K562 (cell line): ENCODE measurements at regions of chr3 and their contacts with region 1.

Region 1: GRCh38 chr3:71859123-71859519 is 74.2 kb upstream of the PROK2 start:
- DNase-seq: peak in 2 of 4 experiments; percentile 10 to 26
- ATAC-seq: peak; percentile 63; the same call in 2 of the 3 replicates
- H3K4me3 ChIP-seq: no peak overlapping the region
- H3K27ac ChIP-seq: no peak overlapping the region
- H3K4me1 ChIP-seq: no peaks in the 10 kb centered on the region
- H3K27me3 ChIP-seq: peaks cover 0 to 13% of the 10 kb centered on the region in 2 experiments; a peak in 3 of 5 replicates
- CTCF ChIP-seq: peak; percentile 16 to 69 (median 41); a peak in 4 of 6 replicates
- EP300 ChIP-seq: no peak
- POLR2A ChIP-seq: no peak
- RAD21 ChIP-seq: peak; percentile 77 to 89

Region 2: GRCh38 chr3:71360764-71361163 is 498.4 kb before region 1 on chr3:
- CTCF ChIA-PET with region 1: no interaction called
- POLR2A ChIA-PET with region 1: no interaction called
- in situ Hi-C with region 1: no loop called
- intact Hi-C with region 1: no loop called
- DNase-seq: no peak
- ATAC-seq: no peak
- H3K4me3 ChIP-seq: no peak overlapping the region
- H3K27ac ChIP-seq: no peak overlapping the region
- H3K4me1 ChIP-seq: no peaks in the 10 kb centered on the region
- H3K27me3 ChIP-seq: no peaks in the 10 kb centered on the region
- CTCF ChIP-seq: no peak
- EP300 ChIP-seq: no peak
- POLR2A ChIP-seq: no peak
- RAD21 ChIP-seq: no peak

Region 3: DNA sequence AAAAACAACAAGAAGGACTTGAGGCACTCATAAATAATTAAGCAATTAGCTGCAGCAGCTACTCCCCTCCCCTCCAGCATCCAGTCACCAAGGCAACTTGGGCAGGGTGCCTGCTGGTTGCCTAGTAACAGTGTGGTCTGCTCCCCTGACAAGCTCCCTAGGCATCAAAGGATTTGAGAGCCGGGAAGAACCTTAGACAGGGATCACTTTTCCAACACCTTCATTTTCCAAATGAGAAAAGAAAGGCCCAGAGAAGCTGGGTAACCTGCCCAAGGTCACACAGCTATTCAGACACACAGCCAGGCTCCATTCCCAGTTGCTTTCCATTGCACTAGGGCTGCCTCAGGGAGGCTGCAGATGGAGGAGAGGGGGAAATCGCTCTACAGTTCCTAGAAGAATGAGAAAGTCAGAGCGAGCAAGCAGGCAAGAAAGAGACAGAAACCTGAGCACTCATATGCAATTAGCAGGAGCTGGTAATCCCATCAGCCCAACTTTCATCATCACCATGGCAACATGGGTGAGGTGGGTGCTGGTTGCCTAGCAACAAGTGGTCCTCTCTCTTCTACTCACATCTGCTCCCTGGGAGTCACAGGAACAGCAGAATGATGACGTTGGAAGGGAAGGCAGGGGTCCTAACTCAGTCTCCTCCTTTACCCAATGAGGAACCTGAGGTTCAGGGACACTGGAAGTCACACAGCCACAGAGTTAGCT is 130.3 kb before region 1 on chr3:
- CTCF ChIA-PET with region 1: interaction called, 8 read pairs
- POLR2A ChIA-PET with region 1: no interaction called
- in situ Hi-C with region 1: loop called (anchors 5 kb)
- intact Hi-C with region 1: loop called (anchors 2 kb)
- DNase-seq: peak; percentile 30 to 65 (median 60)
- ATAC-seq: no peak
- H3K4me3 ChIP-seq: no peak overlapping the region
- H3K27ac ChIP-seq: no peak overlapping the region
- H3K4me1 ChIP-seq: peaks cover 0 to 11% of the 10 kb centered on the region in 2 experiments; a peak in 3 of 5 replicates
- H3K27me3 ChIP-seq: peaks cover 3 to 12% of the 10 kb centered on the region in 2 experiments; a peak in 2 of 5 replicates
- CTCF ChIP-seq: no peak
- EP300 ChIP-seq: no peak
- POLR2A ChIP-seq: no peak
- RAD21 ChIP-seq: no peak

Region 4: GRCh38 chr3:71846185-71846584 is 12.9 kb before region 1 on chr3:
- CTCF ChIA-PET with region 1: no interaction called
- POLR2A ChIA-PET with region 1: no interaction called
- in situ Hi-C with region 1: no loop called
- intact Hi-C with region 1: no loop called
- DNase-seq: peak in 1 of 4 experiments; percentile 6
- ATAC-seq: no peak
- H3K4me3 ChIP-seq: no peak overlapping the region
- H3K27ac ChIP-seq: no peak overlapping the region
- H3K4me1 ChIP-seq: no peaks in the 10 kb centered on the region
- H3K27me3 ChIP-seq: no peaks in the 10 kb centered on the region
- CTCF ChIP-seq: no peak
- EP300 ChIP-seq: no peak
- POLR2A ChIP-seq: no peak
- RAD21 ChIP-seq: no peak

Region 5: DNA sequence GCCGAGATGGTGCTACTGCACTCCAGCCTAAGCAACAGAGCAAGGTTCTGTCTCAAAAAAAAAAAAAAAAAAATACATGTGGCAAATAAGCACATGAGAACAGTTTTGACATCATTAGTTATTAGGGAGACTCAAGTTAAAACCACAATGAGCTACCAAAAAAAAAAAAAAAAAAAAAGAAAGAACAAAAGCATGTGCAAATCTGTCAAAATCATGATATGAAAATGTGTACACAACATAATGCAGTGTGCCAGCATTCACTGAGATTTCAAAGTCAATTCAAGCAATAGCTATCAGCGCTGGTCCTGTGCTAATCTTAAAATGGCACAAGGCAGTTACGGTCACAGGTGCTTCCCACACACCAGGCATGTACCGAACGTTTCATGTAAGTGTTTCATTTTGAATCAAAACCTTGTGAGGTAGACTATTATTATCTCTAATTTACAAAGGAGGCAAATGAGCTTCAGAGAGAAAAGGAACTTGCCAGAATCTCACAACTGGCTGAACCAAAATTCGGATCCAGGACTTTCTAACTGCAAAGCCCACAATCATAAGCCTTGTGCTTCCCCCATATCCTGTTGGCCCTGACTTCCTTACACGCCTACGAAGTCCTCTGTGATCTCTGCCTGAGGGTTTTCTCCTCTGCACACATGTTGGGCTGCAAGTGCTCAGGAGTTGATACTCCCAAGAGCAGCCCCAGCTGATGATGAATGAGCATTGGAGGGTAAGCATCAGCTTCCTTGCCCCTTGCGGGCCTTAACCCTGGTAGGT is 125.9 kb after region 1 on chr3:
- CTCF ChIA-PET with region 1: no interaction called
- POLR2A ChIA-PET with region 1: no interaction called
- in situ Hi-C with region 1: no loop called
- intact Hi-C with region 1: no loop called
- DNase-seq: no peak
- ATAC-seq: no peak
- H3K4me3 ChIP-seq: no peak overlapping the region
- H3K27ac ChIP-seq: no peak overlapping the region
- H3K4me1 ChIP-seq: no peaks in the 10 kb centered on the region; a peak in 2 of 5 replicates
- H3K27me3 ChIP-seq: no peaks in the 10 kb centered on the region
- CTCF ChIP-seq: no peak
- EP300 ChIP-seq: no peak
- POLR2A ChIP-seq: no peak
- RAD21 ChIP-seq: no peak